ENCODE measurements at regions of chr15 and their contacts with region 1.

Region 1: DNA sequence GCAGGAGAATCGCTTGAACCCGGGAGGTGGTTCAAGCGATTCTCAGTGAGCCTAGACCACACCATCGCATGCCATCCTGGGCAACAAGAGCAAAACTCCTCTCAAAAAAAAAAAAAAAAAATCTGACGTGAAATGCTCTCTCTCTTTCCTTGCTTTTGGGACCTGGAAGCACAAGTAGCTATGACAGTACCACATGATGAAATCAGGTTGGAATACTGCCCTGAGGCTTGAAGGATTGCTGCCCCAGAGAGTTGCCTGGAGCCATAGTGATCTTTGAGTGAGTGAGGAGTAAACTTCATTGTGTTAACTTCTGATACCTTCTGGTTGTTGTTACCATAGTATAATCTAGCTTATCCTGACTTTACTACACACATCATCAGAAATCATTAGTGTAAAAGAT is 23.3 kb downstream of the AKAP13 start:
- DNase-seq: no peak
- H3K4me3 ChIP-seq: no peak overlapping the region
- H3K27ac ChIP-seq: no peak overlapping the region
- H3K4me1 ChIP-seq: peaks cover 11 to 51% (median 29%) of the 10 kb centered on the region in 4 experiments
- H3K27me3 ChIP-seq: no peaks in the 10 kb centered on the region

Region 2: GRCh38 chr15:85354461-85354860 is 49.3 kb before region 1 on chr15:
- CTCF ChIA-PET with region 1: no interaction called
- POLR2A ChIA-PET with region 1: no interaction called
- DNase-seq: no peak
- H3K4me3 ChIP-seq: no peak overlapping the region
- H3K27ac ChIP-seq: no peak overlapping the region
- H3K4me1 ChIP-seq: peaks cover 3 to 18% (median 12%) of the 10 kb centered on the region in 4 experiments
- H3K27me3 ChIP-seq: no peaks in the 10 kb centered on the region

Region 3: GRCh38 chr15:85388566-85389305 is 15.0 kb before region 1 on chr15:
- CTCF ChIA-PET with region 1: interaction called, 11 read pairs
- POLR2A ChIA-PET with region 1: no interaction called
- DNase-seq: no peak
- H3K4me3 ChIP-seq: no peak overlapping the region
- H3K27ac ChIP-seq: no peak overlapping the region
- H3K4me1 ChIP-seq: no peaks in the 10 kb centered on the region
- H3K27me3 ChIP-seq: no peaks in the 10 kb centered on the region